Activated CD4-positive, alpha-beta memory T cell treated with anti-CD3 and anti-CD28 coated beads for 36 hours (primary cell): ENCODE measurements at regions of chr15 and their contacts with region 1.

Region 1: DNA sequence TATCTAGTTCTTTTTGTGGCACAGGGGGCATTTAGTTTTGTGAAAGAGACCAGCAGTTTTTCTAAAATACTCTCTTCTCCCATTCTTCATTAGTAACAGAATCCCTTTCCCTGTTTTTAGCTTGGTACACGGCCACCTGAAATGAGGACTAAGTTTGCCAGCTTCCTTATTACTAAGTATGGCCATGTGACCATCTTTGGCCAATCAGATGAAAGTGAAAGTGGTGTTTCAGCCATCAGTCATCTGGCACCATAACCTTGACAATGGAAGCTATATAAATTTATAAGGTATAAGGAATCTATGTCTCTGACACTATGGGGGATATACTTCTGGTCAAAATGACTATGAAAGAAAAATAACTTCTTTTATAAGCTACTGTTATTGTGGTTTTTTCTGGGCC is 570.4 kb downstream of the AGBL1 start:
- DNase-seq: peak; percentile 20
- H3K4me3 Mint-ChIP-seq: no peak overlapping the region
- H3K27ac Mint-ChIP-seq: peak overlapping the region; percentile 87
- H3K4me1 Mint-ChIP-seq: peaks cover 56% of the 10 kb centered on the region
- H3K27me3 Mint-ChIP-seq: no peaks in the 10 kb centered on the region

Region 2: DNA sequence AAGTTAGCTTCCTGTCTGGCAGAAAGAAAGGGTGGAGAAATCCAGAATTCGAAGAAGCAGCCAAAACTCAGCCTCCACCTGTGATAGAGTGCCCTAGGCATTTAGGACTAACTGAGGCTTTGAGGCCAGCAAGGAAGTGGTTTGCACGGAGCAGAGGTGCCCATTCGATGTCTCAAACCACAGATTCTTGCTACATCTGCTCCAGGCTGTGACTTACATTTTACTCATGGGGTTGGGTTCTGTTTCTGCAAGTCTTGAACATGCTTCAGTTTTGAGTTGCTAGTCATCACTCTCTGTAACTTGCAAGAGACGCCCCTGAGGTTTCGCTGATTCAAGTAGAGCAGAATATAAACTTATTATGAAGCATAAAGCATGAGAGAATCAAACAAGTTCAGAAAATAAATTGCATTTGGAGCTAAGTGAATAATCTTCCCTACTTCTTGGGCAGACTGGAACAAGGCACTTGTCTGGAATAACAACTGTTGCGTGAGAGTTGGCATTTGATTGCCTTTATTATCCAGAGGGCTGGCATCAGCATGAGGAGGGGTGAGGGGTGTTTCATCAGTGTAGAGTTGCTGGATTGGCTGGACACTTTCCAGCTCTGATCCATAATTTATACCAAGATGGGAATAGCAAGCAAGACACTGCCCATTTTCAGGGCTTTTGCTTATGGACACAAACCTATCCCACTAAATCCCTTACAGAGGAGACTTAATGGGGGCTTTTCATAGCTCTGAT is 313.9 kb before region 1 on chr15:
- CTCF ChIA-PET with region 1: no interaction called
- POLR2A ChIA-PET with region 1: no interaction called
- intact Hi-C with region 1: loop called (anchors 10 kb)
- DNase-seq: peak; percentile 48
- H3K4me3 Mint-ChIP-seq: no peak overlapping the region
- H3K27ac Mint-ChIP-seq: no peak overlapping the region
- H3K4me1 Mint-ChIP-seq: peaks cover 22% of the 10 kb centered on the region
- H3K27me3 Mint-ChIP-seq: no peaks in the 10 kb centered on the region

Region 3: GRCh38 chr15:86611417-86612040 is 38.6 kb before region 1 on chr15:
- CTCF ChIA-PET with region 1: interaction called, 5 read pairs
- POLR2A ChIA-PET with region 1: interaction called, 3 read pairs
- intact Hi-C with region 1: loop called (anchors 1 kb)
- DNase-seq: peak; percentile 27
- H3K4me3 Mint-ChIP-seq: no peak overlapping the region
- H3K27ac Mint-ChIP-seq: peak overlapping the region; percentile 11
- H3K4me1 Mint-ChIP-seq: peaks cover 55% of the 10 kb centered on the region
- H3K27me3 Mint-ChIP-seq: no peaks in the 10 kb centered on the region

Region 4: GRCh38 chr15:86725628-86726027 is 75.5 kb after region 1 on chr15:
- CTCF ChIA-PET with region 1: no interaction called
- POLR2A ChIA-PET with region 1: no interaction called
- intact Hi-C with region 1: no loop called
- DNase-seq: no peak
- H3K4me3 Mint-ChIP-seq: no peak overlapping the region
- H3K27ac Mint-ChIP-seq: no peak overlapping the region
- H3K4me1 Mint-ChIP-seq: peaks cover 5% of the 10 kb centered on the region
- H3K27me3 Mint-ChIP-seq: no peaks in the 10 kb centered on the region

Region 5: GRCh38 chr15:87021751-87022150 is 371.7 kb after region 1 on chr15:
- CTCF ChIA-PET with region 1: no interaction called
- POLR2A ChIA-PET with region 1: no interaction called
- intact Hi-C with region 1: no loop called
- DNase-seq: no peak
- H3K4me3 Mint-ChIP-seq: no peak overlapping the region
- H3K27ac Mint-ChIP-seq: no peak overlapping the region
- H3K4me1 Mint-ChIP-seq: no peaks in the 10 kb centered on the region
- H3K27me3 Mint-ChIP-seq: peaks cover 11% of the 10 kb centered on the region

Region 6: GRCh38 chr15:87099916-87100315 is 449.8 kb after region 1 on chr15:
- CTCF ChIA-PET with region 1: no interaction called
- POLR2A ChIA-PET with region 1: no interaction called
- intact Hi-C with region 1: no loop called
- DNase-seq: no peak
- H3K4me3 Mint-ChIP-seq: no peak overlapping the region
- H3K27ac Mint-ChIP-seq: no peak overlapping the region
- H3K4me1 Mint-ChIP-seq: no peaks in the 10 kb centered on the region
- H3K27me3 Mint-ChIP-seq: peaks cover 8% of the 10 kb centered on the region